ENCODE measurements at regions of chr9 and their contacts with region 1.

Region 1: DNA sequence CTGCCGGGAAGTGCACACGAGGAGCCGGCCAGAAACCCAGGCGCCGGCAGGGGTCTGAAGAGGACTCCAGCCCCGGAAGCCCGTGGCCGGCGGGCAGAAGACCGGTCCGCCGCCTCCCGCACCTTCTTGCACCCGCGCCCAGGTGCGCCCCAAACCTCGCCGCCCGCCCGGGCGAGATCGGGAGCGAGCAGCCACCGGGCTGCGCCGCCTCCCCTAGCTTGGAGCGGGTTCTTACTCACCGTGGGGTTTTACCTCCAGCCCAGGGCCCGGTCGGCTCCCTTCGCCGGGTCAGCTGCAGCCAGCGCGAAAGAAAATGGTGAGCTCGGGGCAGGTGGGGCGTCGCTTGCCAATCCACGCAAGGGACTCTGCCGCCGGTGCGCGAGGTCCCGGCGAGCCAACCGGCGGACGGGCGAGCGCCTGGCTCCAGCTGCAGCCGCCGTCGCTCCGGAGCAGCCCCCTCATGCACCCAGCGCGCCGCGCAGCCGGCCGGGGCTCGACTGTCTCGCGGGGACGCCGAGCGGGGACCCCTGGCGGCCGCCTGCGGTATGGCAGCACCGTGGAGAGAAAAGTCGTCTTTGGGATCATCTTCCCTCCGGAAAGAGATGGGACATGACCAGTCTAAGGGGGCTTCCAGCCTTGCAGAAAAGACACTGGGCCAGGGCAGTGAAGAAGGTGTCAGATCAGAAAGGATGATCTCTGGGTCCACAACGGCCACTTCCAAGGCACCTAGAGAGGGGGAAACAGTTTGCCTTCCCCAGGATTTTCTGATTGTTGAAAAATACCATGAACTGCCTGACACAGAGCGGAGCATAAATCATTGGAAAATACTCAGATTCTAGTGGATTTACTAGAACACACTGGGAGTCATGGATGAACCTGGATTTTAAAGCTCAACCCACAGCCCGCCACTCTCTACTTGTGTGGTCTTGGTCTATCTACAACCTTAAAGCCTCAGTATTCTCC is at the start of gene MOB3B:
- DNase-seq: peak; percentile 42 to 86 (median 67)
- ATAC-seq: peak; percentile 91
- H3K4me3 ChIP-seq: peak within 1 kb of the TSS; percentile 59
- H3K4me3 Mint-ChIP-seq: peak within 1 kb of the TSS; percentile 89 to 96 (median 94)
- H3K27ac ChIP-seq: peak within 1 kb of the TSS; percentile 45
- H3K27ac Mint-ChIP-seq: peak within 1 kb of the TSS in 8 of 9 donors; percentile 38 to 81 (median 63)
- H3K4me1 ChIP-seq: no peaks in the 10 kb centered on the region
- H3K4me1 Mint-ChIP-seq: peaks cover 0 to 18% (median 5%) of the 10 kb centered on the region in 7 donors
- H3K27me3 ChIP-seq: no peaks in the 10 kb centered on the region
- H3K27me3 Mint-ChIP-seq: peaks cover 0 to 31% (median 0%) of the 10 kb centered on the region in 5 donors
- total RNA-seq, gene MOB3B: 0.29 to 1.8 (median 0.76) TPM

Region 2: GRCh38 chr9:27333241-27334052 is 196.2 kb before region 1 on chr9:
- CTCF ChIA-PET with region 1: interaction called, 24 read pairs
- POLR2A ChIA-PET with region 1: no interaction called
- intact Hi-C with region 1: loop called (anchors 1 kb)
- DNase-seq: peak in 7 of 9 donors; percentile 42 to 67 (median 58)
- ATAC-seq: peak; percentile 73
- H3K4me3 ChIP-seq: no peak overlapping the region
- H3K4me3 Mint-ChIP-seq: no peak overlapping the region
- H3K27ac ChIP-seq: no peak overlapping the region
- H3K27ac Mint-ChIP-seq: no peak overlapping the region
- H3K4me1 ChIP-seq: no peaks in the 10 kb centered on the region
- H3K4me1 Mint-ChIP-seq: peaks cover 0 to 12% (median 0%) of the 10 kb centered on the region in 7 donors
- H3K27me3 ChIP-seq: no peaks in the 10 kb centered on the region
- H3K27me3 Mint-ChIP-seq: peaks cover 0 to 4% (median 0%) of the 10 kb centered on the region in 5 donors

Region 3: DNA sequence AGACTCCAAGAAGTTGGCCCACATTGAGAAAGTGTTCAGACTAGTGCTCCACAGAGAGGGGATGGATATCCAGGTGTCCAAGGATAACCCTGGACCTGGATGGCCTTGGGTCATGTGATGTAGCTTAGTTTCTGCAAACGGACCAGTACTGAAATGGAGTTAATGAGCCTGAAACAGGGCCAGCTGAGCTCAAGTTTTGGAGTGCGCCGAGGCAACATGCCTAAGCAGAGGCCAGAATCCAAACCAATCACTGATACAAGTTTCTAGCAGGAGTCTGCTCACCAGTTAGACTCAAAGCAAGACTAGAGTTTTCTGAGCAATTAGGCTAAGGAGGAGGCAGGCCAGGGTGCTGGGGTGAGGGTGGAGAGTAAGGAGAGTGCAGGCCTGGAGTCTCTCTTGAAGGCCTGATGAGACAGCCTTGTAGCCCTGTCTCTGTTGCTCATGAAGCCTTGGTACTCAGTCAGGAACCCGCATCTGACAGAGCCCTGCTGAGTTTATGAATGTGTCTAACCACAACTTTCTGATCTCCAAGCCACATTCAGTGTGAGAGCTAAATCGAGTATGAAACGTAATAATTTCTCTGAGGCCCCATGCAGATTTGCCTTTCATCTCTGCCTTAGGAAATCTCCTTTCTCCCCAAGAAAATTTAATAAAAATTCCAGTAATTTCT is 163.8 kb before region 1 on chr9:
- CTCF ChIA-PET with region 1: no interaction called
- POLR2A ChIA-PET with region 1: no interaction called
- intact Hi-C with region 1: loop called in 1 of 2 experiments (anchors 1 kb)
- DNase-seq: peak in 7 of 9 donors; percentile 2 to 55 (median 11)
- ATAC-seq: peak; percentile 49
- H3K4me3 ChIP-seq: no peak overlapping the region
- H3K4me3 Mint-ChIP-seq: peak overlapping the region in 4 of 10 donors; percentile 28 to 81 (median 32)
- H3K27ac ChIP-seq: no peak overlapping the region
- H3K27ac Mint-ChIP-seq: peak overlapping the region in 2 of 9 donors; percentile 7 to 85
- H3K4me1 ChIP-seq: peaks cover 0 to 18% of the 10 kb centered on the region in 2 donors
- H3K4me1 Mint-ChIP-seq: peaks cover 20 to 50% (median 26%) of the 10 kb centered on the region in 7 donors
- H3K27me3 ChIP-seq: peaks cover 0 to 3% of the 10 kb centered on the region in 2 donors
- H3K27me3 Mint-ChIP-seq: peaks cover 0 to 8% (median 7%) of the 10 kb centered on the region in 5 donors

Region 4: GRCh38 chr9:27430750-27431535 is 98.7 kb before region 1 on chr9:
- CTCF ChIA-PET with region 1: no interaction called
- POLR2A ChIA-PET with region 1: no interaction called
- intact Hi-C with region 1: loop called in 1 of 2 experiments (anchors 5 kb)
- DNase-seq: no peak
- ATAC-seq: no peak
- H3K4me3 ChIP-seq: no peak overlapping the region
- H3K4me3 Mint-ChIP-seq: no peak overlapping the region
- H3K27ac ChIP-seq: no peak overlapping the region
- H3K27ac Mint-ChIP-seq: no peak overlapping the region
- H3K4me1 ChIP-seq: no peaks in the 10 kb centered on the region
- H3K4me1 Mint-ChIP-seq: peaks cover 9 to 16% (median 12%) of the 10 kb centered on the region in 7 donors
- H3K27me3 ChIP-seq: no peaks in the 10 kb centered on the region
- H3K27me3 Mint-ChIP-seq: no peaks in the 10 kb centered on the region

Region 5: DNA sequence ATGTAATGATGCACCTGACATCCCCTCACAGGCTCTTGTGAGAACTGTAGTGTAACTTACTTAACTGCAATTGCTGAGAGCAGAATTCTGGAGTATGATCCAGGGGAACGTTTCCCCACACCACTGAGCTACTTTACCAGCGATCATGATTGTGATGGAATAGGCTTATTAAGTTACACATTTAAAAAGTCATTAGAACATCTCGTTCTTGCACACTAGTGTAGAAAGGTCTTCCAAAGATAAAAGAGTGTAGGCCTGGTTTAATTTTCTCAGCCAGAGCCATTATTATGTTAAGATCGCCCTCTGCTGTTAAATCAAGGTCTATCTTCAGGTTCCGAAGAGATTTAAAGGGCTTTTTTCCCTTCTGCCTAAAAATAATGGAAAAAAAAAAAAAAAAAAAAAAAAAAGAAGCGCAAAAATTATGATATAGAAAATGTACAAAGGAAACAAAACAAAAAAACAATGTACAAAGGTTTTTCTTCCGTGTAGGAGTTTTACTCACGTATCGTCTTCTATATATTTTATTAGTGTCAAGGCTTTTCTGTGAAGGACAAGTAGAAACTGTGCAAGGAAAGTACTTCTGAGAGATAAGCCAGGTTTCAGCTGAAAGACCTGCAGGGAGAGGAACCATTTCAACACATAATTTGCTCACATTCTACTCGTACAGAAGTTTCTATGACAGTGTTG is 18.6 kb after region 1 on chr9:
- CTCF ChIA-PET with region 1: interaction called, 3 read pairs
- POLR2A ChIA-PET with region 1: no interaction called
- intact Hi-C with region 1: loop called in 1 of 2 experiments (anchors 2 kb)
- DNase-seq: peak in 1 of 9 donors; percentile 21
- ATAC-seq: no peak
- H3K4me3 ChIP-seq: no peak overlapping the region
- H3K4me3 Mint-ChIP-seq: no peak overlapping the region
- H3K27ac ChIP-seq: no peak overlapping the region
- H3K27ac Mint-ChIP-seq: no peak overlapping the region
- H3K4me1 ChIP-seq: no peaks in the 10 kb centered on the region
- H3K4me1 Mint-ChIP-seq: peaks cover 0 to 2% (median 0%) of the 10 kb centered on the region in 7 donors
- H3K27me3 ChIP-seq: no peaks in the 10 kb centered on the region
- H3K27me3 Mint-ChIP-seq: no peaks in the 10 kb centered on the region